ENCODE measurements at regions of chr3 and their contacts with region 1.

Region 1: GRCh38 chr3:73624821-73625665 is at the start of gene PDZRN3:
- DNase-seq: no peak
- ATAC-seq: no peak
- H3K4me3 ChIP-seq: no peak within 1 kb of the TSS
- H3K27ac ChIP-seq: no peak within 1 kb of the TSS
- H3K4me1 ChIP-seq: no peaks in the 10 kb centered on the region
- H3K27me3 ChIP-seq: 0 out of 2 replicates have a peak, but pooled peaks cover 18% of the 10 kb centered on the region
- CTCF ChIP-seq: no peak
- total RNA-seq, gene PDZRN3: not detected in 2 replicates

Region 2: DNA sequence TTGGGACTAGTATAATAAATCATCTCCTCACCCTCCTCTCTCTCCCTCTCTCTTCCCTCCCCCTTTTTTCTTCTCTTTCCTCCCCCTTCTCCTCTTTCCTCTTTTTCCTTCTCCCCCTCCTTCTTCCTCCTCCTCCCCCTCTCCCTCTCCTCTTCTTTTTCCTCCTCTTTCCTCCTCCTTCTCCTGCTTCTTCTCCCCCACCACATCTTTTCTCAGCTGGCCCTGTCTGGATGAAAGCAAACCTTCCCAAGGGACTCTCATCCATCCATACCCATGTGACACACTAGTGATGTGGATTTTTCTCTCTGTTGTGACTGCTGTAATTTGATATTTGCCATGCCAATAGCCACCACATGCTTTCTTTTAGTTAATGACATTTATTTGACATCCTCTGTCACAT is 436.3 kb before region 1 on chr3:
- CTCF ChIA-PET with region 1: interaction called, 13 read pairs
- POLR2A ChIA-PET with region 1: no interaction called
- intact Hi-C with region 1: no loop called
- DNase-seq: no peak
- ATAC-seq: no peak
- H3K4me3 ChIP-seq: no peak overlapping the region
- H3K27ac ChIP-seq: no peak overlapping the region
- H3K4me1 ChIP-seq: no peaks in the 10 kb centered on the region
- H3K27me3 ChIP-seq: peaks cover 8% of the 10 kb centered on the region; the same call in 1 of the 2 replicates
- CTCF ChIP-seq: no peak

Region 3: GRCh38 chr3:73502609-73503583 is 122.1 kb before region 1 on chr3:
- CTCF ChIA-PET with region 1: no interaction called
- POLR2A ChIA-PET with region 1: no interaction called
- intact Hi-C with region 1: no loop called
- DNase-seq: peak; percentile 65
- ATAC-seq: peak; percentile 74
- H3K4me3 ChIP-seq: no peak overlapping the region
- H3K27ac ChIP-seq: no peak overlapping the region
- H3K4me1 ChIP-seq: no peaks in the 10 kb centered on the region
- H3K27me3 ChIP-seq: peaks cover 13% of the 10 kb centered on the region
- CTCF ChIP-seq: peak; percentile 91

Measured in PC-3 (cell line).